ENCODE measurements at regions of chr16 and their contacts with region 1.

Region 1: GRCh38 chr16:47132310-47132709 is 11.4 kb downstream of the NETO2 start:
- DNase-seq: no peak
- H3K4me3 ChIP-seq: no peak overlapping the region
- H3K27ac ChIP-seq: no peak overlapping the region
- H3K4me1 ChIP-seq: peaks cover 8% of the 10 kb centered on the region
- H3K27me3 ChIP-seq: no peaks in the 10 kb centered on the region
- CTCF ChIP-seq: peak; percentile 17

Region 2: GRCh38 chr16:48153774-48154173 is 1021.5 kb after region 1 on chr16:
- intact Hi-C with region 1: loop called (anchors 5 kb)
- DNase-seq: no peak
- H3K4me3 ChIP-seq: no peak overlapping the region
- H3K27ac ChIP-seq: no peak overlapping the region
- H3K4me1 ChIP-seq: peaks cover 15% of the 10 kb centered on the region
- H3K27me3 ChIP-seq: no peaks in the 10 kb centered on the region
- CTCF ChIP-seq: no peak